ENCODE measurements at regions of chr17 and their contacts with region 1.

Region 1: DNA sequence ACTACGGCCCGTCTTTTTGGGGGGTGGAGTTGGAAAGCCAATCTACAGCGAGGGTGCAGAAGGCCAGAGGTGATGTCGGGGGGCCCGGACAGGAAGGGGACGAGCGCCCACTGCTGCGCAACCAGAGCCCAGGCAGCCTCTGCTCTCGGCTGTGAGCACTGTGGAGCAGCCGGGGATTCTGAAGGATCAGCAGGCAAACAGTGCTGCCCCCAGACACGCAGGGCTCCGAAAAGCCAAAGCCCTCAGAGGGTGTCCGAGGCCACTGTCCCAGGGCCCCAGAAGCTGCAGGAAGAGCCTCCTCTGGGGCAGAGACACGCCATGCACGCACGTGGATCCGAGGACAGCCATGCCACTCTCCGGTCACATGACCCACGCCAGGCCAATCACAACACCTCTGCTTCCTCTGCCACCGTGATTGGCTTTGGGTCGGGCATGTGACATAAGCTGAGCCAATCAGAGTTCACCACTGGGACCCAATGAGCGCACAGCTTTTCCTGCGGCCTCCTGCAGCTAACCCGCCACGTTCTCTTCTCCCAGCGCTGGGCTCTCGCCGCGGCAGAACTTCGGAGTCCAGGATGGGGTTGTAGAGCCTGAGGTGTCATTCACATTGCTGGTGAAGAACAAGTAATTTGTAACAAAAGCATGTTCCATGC is 40.7 kb downstream of the ACTG1 start:
- DNase-seq: peak in 2 of 6 donors; percentile 26 to 49
- ATAC-seq: peak in 3 of 4 donors; percentile 36 to 59 (median 52)
- H3K4me3 ChIP-seq: no peak overlapping the region
- H3K27ac ChIP-seq: peak overlapping the region in 1 of 4 donors; percentile 4
- H3K4me1 ChIP-seq: peaks cover 0 to 8% (median 6%) of the 10 kb centered on the region in 3 donors
- H3K27me3 ChIP-seq: no peaks in the 10 kb centered on the region
- CTCF ChIP-seq: no peak

Region 2: DNA sequence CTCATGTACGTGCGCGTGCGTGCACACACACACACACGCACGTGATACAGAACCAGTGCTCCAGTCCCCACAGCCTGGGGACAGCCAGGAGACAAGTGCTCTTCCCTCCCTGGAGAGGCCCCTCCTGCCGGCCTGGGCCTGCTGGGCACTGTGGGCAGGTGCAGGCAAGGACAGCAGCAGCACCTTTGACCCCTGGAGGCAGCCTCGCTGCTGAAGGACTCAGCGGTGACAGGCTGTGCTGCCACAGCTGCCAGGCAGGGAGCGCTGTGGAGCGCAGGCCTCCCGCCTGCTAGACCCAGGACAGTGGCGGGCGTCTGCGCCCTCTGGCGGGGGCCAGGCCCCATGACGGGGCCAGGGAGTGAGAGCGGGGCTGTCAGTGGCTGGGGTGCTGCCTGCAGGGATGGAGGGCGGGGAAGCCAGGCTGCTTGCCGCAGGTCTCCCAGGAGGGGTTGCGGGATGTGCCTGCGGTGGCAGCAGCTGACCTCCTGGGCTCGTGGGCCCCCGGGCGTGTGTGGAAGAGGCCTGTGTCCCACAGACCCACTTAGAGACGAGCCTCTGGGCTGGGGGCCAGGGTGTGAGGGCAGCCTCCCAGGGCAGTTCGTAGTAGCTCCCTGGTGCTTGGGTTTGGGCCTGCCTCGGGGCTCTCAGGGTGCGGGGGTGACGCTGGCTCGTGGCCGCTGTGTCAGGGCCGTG is 370.2 kb before region 1 on chr17:
- intact Hi-C with region 1: no loop called
- DNase-seq: peak; percentile 75 to 96 (median 90)
- ATAC-seq: peak; percentile 92 to 96 (median 94)
- H3K4me3 ChIP-seq: no peak overlapping the region
- H3K27ac ChIP-seq: no peak overlapping the region
- H3K4me1 ChIP-seq: no peaks in the 10 kb centered on the region
- H3K27me3 ChIP-seq: no peaks in the 10 kb centered on the region
- CTCF ChIP-seq: peak; percentile 99 to 100 (median 100)

Region 3: GRCh38 chr17:81401723-81402529 is 70.0 kb before region 1 on chr17:
- intact Hi-C with region 1: loop called in 1 of 3 experiments (anchors 10 kb)
- DNase-seq: peak in 1 of 6 donors; percentile 72
- ATAC-seq: no peak
- H3K4me3 ChIP-seq: no peak overlapping the region
- H3K27ac ChIP-seq: peak overlapping the region in 1 of 4 donors; percentile 15
- H3K4me1 ChIP-seq: peaks cover 0 to 8% (median 0%) of the 10 kb centered on the region in 3 donors
- H3K27me3 ChIP-seq: no peaks in the 10 kb centered on the region
- CTCF ChIP-seq: no peak

Measured in pancreas (tissue), 10 donors.